BJ (cell line): ENCODE measurements at regions of chr11 and their contacts with region 1.

Region 1: GRCh38 chr11:3037040-3037944 is 19.9 kb downstream of the CARS1 start:
- DNase-seq: no peak
- H3K4me3 ChIP-seq: no peak overlapping the region
- H3K27me3 ChIP-seq: no peaks in the 10 kb centered on the region
- CTCF ChIP-seq: peak; percentile 82

Region 2: DNA sequence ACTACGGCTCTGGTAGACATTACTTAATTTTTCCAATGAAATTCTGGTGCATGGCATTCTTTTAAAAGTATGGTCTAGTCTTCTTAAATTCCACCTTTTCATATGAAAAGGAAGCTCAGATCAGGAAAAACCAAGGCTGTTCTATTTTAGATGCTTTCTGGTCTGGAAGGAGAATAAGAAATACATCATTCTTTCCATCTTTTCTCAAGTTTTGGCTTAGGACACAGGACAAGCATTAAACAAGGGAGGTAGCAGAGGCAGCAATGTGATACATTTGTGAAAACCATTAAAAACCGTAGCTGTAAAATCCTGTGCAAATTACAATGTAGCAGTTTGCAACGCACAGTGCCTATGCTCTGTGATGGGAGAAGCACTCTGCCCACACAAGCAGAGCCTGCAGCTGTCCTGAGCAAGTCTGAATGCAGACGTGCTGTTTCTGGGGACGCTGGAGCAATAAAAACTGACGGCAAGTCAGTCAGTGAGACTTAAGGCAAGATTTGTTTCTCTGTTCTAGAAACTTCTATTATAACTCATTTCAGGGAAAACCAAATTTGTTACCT is 68.9 kb before region 1 on chr11:
- CTCF ChIA-PET with region 1: no interaction called
- POLR2A ChIA-PET with region 1: no interaction called
- DNase-seq: no peak
- H3K4me3 ChIP-seq: no peak overlapping the region
- H3K27me3 ChIP-seq: no peaks in the 10 kb centered on the region
- CTCF ChIP-seq: no peak

Region 3: GRCh38 chr11:3021125-3021524 is 16.2 kb before region 1 on chr11:
- CTCF ChIA-PET with region 1: interaction called, 55 read pairs
- POLR2A ChIA-PET with region 1: no interaction called
- DNase-seq: no peak
- H3K4me3 ChIP-seq: no peak overlapping the region
- H3K27me3 ChIP-seq: no peaks in the 10 kb centered on the region
- CTCF ChIP-seq: peak; percentile 40

Region 4: DNA sequence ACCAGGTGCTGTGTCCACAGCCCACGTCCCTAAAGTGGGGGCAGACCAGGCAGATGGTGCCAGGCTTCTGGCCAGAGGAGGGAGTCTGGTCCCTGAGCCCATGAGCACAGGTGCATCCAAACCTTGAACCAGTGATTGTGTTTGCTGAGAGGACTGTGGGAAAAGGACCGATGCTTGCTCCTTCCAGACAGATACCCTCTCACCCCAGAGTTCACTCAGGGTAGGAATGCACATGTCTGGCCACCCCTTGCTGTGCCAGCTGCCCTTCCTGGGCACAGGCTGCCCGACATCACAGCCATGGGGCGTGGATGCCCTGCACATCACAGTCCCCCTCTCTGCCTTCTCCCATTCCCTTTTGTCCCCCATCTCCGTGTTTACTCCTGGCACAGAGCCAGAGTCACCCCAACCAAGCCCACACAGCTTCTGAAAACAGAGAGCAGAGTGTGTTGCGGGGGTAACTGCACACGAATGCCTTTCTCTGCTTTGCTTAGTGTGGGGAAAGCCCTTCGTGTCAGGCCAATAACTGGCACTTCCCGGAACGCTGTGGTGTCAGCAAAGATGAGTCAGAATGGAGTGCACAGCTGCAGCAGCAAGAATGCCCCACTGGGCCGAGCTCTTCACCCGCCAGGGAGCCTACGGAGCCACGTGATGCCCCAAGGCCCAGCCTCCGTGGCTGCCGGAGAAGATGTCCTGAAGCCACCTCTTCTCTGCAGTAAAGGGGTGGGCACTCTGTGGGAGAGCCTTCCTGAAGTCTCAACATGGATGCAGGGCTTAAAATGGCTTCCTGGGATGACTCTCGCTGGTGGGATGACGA is 12.3 kb after region 1 on chr11:
- CTCF ChIA-PET with region 1: interaction called, 54 read pairs
- POLR2A ChIA-PET with region 1: interaction called, 3 read pairs
- DNase-seq: peak; percentile 78
- H3K4me3 ChIP-seq: no peak overlapping the region
- H3K27me3 ChIP-seq: no peaks in the 10 kb centered on the region
- CTCF ChIP-seq: peak; percentile 45; the same call in 1 of the 2 replicates